Activated naive CD4-positive, alpha-beta T cell treated with anti-CD3 and anti-CD28 coated beads for 36 hours (primary cell): ENCODE measurements at regions of chr2 and their contacts with region 1.

Region 1: GRCh38 chr2:230793572-230794359 is 71.0 kb upstream of the ITM2C start:
- DNase-seq: peak; percentile 89
- H3K4me3 Mint-ChIP-seq: peak overlapping the region; percentile 56
- H3K27ac Mint-ChIP-seq: no peak overlapping the region
- H3K4me1 Mint-ChIP-seq: peaks cover 52% of the 10 kb centered on the region
- H3K27me3 Mint-ChIP-seq: no peaks in the 10 kb centered on the region

Region 2: DNA sequence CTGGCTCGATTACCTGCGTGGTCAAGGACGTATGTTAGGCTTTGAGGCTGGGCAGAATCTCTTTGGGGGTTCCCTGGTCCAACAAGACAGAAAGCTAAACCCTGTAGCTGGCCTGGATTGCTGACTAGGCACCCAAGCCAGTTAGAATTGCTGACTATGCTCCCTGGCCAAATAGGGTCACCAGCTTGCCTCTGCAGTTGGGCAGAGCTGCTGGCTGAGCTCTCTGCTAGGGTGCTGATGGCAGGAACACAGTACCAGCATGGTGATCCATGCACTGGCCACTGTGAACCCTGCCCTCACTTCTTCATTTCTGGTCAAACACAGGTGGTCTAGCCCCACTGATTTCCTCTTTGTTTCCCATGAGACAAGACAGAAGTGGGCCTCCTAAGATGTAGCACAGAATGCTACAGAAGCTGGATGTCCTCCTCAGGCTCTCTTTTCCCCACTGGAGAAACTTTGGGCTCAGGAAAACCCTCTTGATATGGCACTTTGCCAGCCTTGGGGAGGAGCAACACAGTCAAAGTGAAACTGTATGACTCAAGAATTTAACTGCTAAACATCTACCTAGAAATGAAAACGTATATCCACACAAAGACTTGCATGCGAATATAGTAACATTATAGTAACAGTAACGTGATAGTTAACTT is 446.0 kb before region 1 on chr2:
- CTCF ChIA-PET with region 1: interaction called, 3 read pairs
- intact Hi-C with region 1: loop called (anchors 5 kb)
- DNase-seq: peak; percentile 76
- H3K4me3 Mint-ChIP-seq: no peak overlapping the region
- H3K27ac Mint-ChIP-seq: peak overlapping the region; percentile 85
- H3K4me1 Mint-ChIP-seq: peaks cover 71% of the 10 kb centered on the region
- H3K27me3 Mint-ChIP-seq: no peaks in the 10 kb centered on the region

Region 3: GRCh38 chr2:230455005-230455684 is 338.6 kb before region 1 on chr2:
- CTCF ChIA-PET with region 1: no interaction called
- intact Hi-C with region 1: no loop called
- DNase-seq: no peak
- H3K4me3 Mint-ChIP-seq: no peak overlapping the region
- H3K27ac Mint-ChIP-seq: no peak overlapping the region
- H3K4me1 Mint-ChIP-seq: peaks cover 62% of the 10 kb centered on the region
- H3K27me3 Mint-ChIP-seq: no peaks in the 10 kb centered on the region

Region 4: DNA sequence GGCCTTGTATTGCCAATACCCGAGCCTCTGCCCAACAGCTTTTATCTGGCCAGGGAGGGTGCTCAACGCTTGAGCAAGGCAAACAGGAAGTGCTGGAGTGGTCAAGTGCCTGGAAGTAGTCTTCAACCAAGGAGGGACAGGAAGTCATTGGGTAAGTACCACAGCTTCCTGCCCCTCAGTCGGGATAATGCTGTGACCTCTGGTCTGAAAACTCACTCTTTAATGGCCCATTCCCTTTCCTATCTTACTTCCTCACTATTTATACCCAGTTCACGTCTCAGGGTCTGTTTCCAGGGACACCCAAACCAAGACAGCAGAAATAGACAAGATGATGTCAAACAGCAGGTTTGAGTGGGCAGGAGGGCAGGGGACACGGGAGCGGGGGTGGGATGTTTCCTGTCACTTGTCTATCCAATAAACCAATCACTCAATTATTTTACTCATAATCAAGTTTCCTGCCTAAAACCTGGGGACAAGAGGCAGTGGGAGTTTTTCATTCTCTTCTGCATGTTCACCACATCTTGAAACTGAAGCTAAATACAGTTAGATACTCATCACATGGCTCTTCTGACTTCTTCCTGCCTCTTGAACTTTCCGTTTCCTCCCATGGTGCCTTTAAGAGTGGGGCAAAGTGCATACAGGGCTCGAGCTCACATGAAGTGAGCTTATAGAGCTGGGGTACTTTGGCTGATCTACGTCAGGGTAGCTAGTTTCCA is 150.0 kb before region 1 on chr2:
- CTCF ChIA-PET with region 1: interaction called, 4 read pairs
- intact Hi-C with region 1: loop called (anchors 1 kb)
- DNase-seq: peak; percentile 83
- H3K4me3 Mint-ChIP-seq: peak overlapping the region; percentile 47
- H3K27ac Mint-ChIP-seq: peak overlapping the region; percentile 96
- H3K4me1 Mint-ChIP-seq: peaks cover 33% of the 10 kb centered on the region
- H3K27me3 Mint-ChIP-seq: no peaks in the 10 kb centered on the region

Region 5: GRCh38 chr2:230712443-230713330 is 81.1 kb before region 1 on chr2 and contains the start of gene CAB39:
- CTCF ChIA-PET with region 1: interaction called, 53 read pairs
- intact Hi-C with region 1: loop called (anchors 1 kb)
- DNase-seq: peak; percentile 84
- H3K4me3 Mint-ChIP-seq: peak within 1 kb of the TSS; percentile 90
- H3K27ac Mint-ChIP-seq: peak within 1 kb of the TSS; percentile 94
- H3K4me1 Mint-ChIP-seq: peaks cover 40% of the 10 kb centered on the region
- H3K27me3 Mint-ChIP-seq: no peaks in the 10 kb centered on the region
- total RNA-seq, gene CAB39: 86.6 to 97.5 TPM

Region 6: DNA sequence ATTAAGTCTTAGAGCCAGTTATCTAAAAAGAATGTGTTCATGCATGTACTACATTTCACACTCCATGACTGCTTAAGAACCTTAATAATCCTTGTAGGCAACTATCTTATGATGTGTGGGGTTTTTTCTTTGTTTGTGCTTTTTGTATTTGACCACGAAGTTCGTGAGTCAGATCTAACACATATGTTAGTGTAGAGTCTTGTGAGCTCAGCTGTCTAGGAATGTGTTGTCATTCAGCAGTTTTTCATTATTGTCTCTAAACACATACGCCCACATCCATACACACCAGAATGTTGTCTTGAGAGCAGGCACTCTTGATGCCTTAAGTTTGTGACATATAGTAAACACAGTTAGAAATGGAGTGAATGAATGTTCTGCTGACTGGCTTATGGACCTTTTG is 42.7 kb before region 1 on chr2:
- CTCF ChIA-PET with region 1: interaction called, 4 read pairs
- intact Hi-C with region 1: loop called (anchors 1 kb)
- DNase-seq: peak; percentile 12
- H3K4me3 Mint-ChIP-seq: no peak overlapping the region
- H3K27ac Mint-ChIP-seq: no peak overlapping the region
- H3K4me1 Mint-ChIP-seq: peaks cover 76% of the 10 kb centered on the region
- H3K27me3 Mint-ChIP-seq: no peaks in the 10 kb centered on the region